PC-3 (cell line): ENCODE measurements at regions of chr1 and their contacts with region 1.

Region 1: DNA sequence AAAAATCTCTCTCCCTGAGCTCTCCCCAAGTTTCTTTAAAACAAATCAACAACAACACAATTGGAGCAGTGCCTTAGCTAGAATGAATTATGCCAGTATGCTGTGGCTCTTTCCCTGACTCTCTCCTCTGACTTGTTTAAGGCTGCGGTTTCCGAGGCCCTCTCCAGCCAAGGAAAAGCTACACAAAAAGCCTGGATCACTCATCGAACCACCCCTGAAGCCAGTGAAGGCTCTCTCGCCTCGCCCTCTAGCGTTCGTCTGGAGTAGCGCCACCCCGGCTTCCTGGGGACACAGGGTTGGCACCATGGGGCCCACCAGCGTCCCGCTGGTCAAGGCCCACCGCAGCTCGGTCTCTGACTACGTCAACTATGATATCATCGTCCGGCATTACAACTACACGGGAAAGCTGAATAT is 1.9 kb downstream of the S1PR1 start:
- DNase-seq: peak; percentile 92
- ATAC-seq: peak; percentile 62
- H3K4me3 ChIP-seq: peak overlapping the region; percentile 62
- H3K27ac ChIP-seq: no peak overlapping the region
- H3K4me1 ChIP-seq: peaks cover 9% of the 10 kb centered on the region; the same call in 1 of the 2 replicates
- H3K27me3 ChIP-seq: no peaks in the 10 kb centered on the region
- CTCF ChIP-seq: peak; percentile 95

Region 2: DNA sequence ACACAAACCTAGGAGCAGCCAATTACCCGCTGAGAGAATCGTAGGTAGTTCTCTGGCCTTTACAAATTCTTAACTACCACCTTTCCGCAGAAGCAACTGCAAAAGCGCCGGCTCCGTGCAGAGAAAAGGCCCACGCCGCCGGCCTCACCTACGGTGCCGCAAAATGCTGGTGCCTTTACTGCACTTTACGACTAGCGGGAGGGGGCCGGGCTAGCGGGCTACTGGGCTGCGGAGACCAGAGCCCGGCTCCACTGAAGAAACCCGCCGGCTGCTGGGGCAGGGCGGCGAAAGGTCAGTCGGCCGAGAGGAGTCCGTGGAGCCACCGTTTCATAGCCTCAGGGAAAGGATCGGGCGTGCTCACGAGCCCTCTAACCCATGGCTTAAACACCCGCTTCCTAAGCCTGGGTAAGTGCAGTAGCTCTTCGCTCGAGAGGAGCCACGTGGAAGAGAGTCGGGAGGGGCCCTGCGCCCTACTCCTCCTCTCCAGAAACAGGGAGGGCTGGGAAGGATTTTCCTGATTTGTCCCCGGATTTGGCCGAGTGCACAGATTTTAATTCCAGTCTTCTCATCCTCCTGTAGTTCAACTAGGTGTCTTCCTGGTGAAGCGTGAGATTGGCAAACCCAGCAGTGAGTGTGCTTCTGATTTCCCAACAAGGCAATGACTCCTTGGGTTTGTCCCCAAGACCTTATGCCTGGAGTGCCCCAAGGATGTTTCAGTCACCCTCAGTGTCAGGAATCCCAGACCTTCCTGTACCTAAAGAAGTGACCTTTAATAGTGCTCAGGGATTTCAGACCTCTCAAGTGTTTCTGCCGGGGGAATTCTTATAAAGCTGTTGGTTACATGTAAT is 212.8 kb before region 1 on chr1 and contains the start of gene DPH5:
- CTCF ChIA-PET with region 1: no interaction called
- POLR2A ChIA-PET with region 1: no interaction called
- intact Hi-C with region 1: loop called (anchors 1 kb)
- DNase-seq: peak; percentile 90
- ATAC-seq: peak; percentile 89
- H3K4me3 ChIP-seq: peak within 1 kb of the TSS; percentile 80
- H3K27ac ChIP-seq: peak within 1 kb of the TSS; percentile 65
- H3K4me1 ChIP-seq: peaks cover 30% of the 10 kb centered on the region
- H3K27me3 ChIP-seq: no peaks in the 10 kb centered on the region
- CTCF ChIP-seq: no peak
- total RNA-seq, gene DPH5: 24.9 and 32.8 TPM in 2 replicates

Region 3: GRCh38 chr1:101136739-101137138 is 101.9 kb before region 1 on chr1:
- CTCF ChIA-PET with region 1: interaction called, 5 read pairs
- POLR2A ChIA-PET with region 1: no interaction called
- intact Hi-C with region 1: loop called (anchors 1 kb)
- DNase-seq: peak; percentile 42
- ATAC-seq: peak; percentile 22; the same call in 1 of the 2 replicates
- H3K4me3 ChIP-seq: no peak overlapping the region
- H3K27ac ChIP-seq: no peak overlapping the region
- H3K4me1 ChIP-seq: peaks cover 16% of the 10 kb centered on the region
- H3K27me3 ChIP-seq: no peaks in the 10 kb centered on the region
- CTCF ChIP-seq: peak; percentile 60

Region 4: GRCh38 chr1:101174722-101175121 is 64.0 kb before region 1 on chr1:
- CTCF ChIA-PET with region 1: interaction called, 7 read pairs
- POLR2A ChIA-PET with region 1: interaction called, 4 read pairs
- intact Hi-C with region 1: loop called (anchors 2 kb)
- DNase-seq: peak; percentile 92
- ATAC-seq: peak; percentile 92
- H3K4me3 ChIP-seq: 0 out of 2 replicates have a peak overlapping the region, but pooled peaks have one; percentile 12
- H3K27ac ChIP-seq: peak overlapping the region; percentile 71
- H3K4me1 ChIP-seq: peaks cover 16% of the 10 kb centered on the region
- H3K27me3 ChIP-seq: no peaks in the 10 kb centered on the region
- CTCF ChIP-seq: no peak

Region 5: GRCh38 chr1:101259744-101260148 is 21.1 kb after region 1 on chr1:
- CTCF ChIA-PET with region 1: interaction called, 7 read pairs
- POLR2A ChIA-PET with region 1: no interaction called
- intact Hi-C with region 1: loop called (anchors 2 kb)
- DNase-seq: peak; percentile 85
- ATAC-seq: peak; percentile 50
- H3K4me3 ChIP-seq: no peak overlapping the region
- H3K27ac ChIP-seq: peak overlapping the region; percentile 84
- H3K4me1 ChIP-seq: peaks cover 63% of the 10 kb centered on the region
- H3K27me3 ChIP-seq: no peaks in the 10 kb centered on the region
- CTCF ChIP-seq: no peak

Region 6: GRCh38 chr1:101357444-101357986 is 118.8 kb after region 1 on chr1:
- CTCF ChIA-PET with region 1: no interaction called
- POLR2A ChIA-PET with region 1: no interaction called
- intact Hi-C with region 1: loop called (anchors 5 kb)
- DNase-seq: peak; percentile 89
- ATAC-seq: peak; percentile 98
- H3K4me3 ChIP-seq: no peak overlapping the region
- H3K27ac ChIP-seq: no peak overlapping the region
- H3K4me1 ChIP-seq: no peaks in the 10 kb centered on the region
- H3K27me3 ChIP-seq: peaks cover 49% of the 10 kb centered on the region
- CTCF ChIP-seq: peak; percentile 92